MCF 10A (cell line): ENCODE measurements at regions of chr1 and their contacts with region 1.

Region 1: GRCh38 chr1:75991497-75992114 is 59.4 kb upstream of the ASB17 start:
- DNase-seq: peak; percentile 92
- H3K4me3 Mint-ChIP-seq: no peak overlapping the region
- H3K27ac Mint-ChIP-seq: no peak overlapping the region
- H3K4me1 Mint-ChIP-seq: no peaks in the 10 kb centered on the region
- H3K27me3 Mint-ChIP-seq: no peaks in the 10 kb centered on the region
- CTCF ChIP-seq: peak; percentile 86

Region 2: GRCh38 chr1:75841421-75841820 is 150.2 kb before region 1 on chr1:
- CTCF ChIA-PET with region 1: interaction called, 4 read pairs
- POLR2A ChIA-PET with region 1: no interaction called
- intact Hi-C with region 1: loop called (anchors 5 kb)
- DNase-seq: no peak
- H3K4me3 Mint-ChIP-seq: no peak overlapping the region
- H3K27ac Mint-ChIP-seq: no peak overlapping the region
- H3K4me1 Mint-ChIP-seq: no peaks in the 10 kb centered on the region
- H3K27me3 Mint-ChIP-seq: no peaks in the 10 kb centered on the region
- CTCF ChIP-seq: no peak

Region 3: GRCh38 chr1:75908717-75909152 is 82.9 kb before region 1 on chr1:
- CTCF ChIA-PET with region 1: interaction called, 7 read pairs
- POLR2A ChIA-PET with region 1: no interaction called
- intact Hi-C with region 1: loop called (anchors 1 kb)
- DNase-seq: peak; percentile 72
- H3K4me3 Mint-ChIP-seq: no peak overlapping the region
- H3K27ac Mint-ChIP-seq: no peak overlapping the region
- H3K4me1 Mint-ChIP-seq: no peaks in the 10 kb centered on the region
- H3K27me3 Mint-ChIP-seq: peaks cover 33% of the 10 kb centered on the region
- CTCF ChIP-seq: peak; percentile 63

Region 4: GRCh38 chr1:75980972-75981897 is 10.4 kb before region 1 on chr1:
- CTCF ChIA-PET with region 1: interaction called, 18 read pairs
- POLR2A ChIA-PET with region 1: interaction called, 3 read pairs
- intact Hi-C with region 1: no loop called
- DNase-seq: no peak
- H3K4me3 Mint-ChIP-seq: no peak overlapping the region
- H3K27ac Mint-ChIP-seq: no peak overlapping the region
- H3K4me1 Mint-ChIP-seq: peaks cover 6% of the 10 kb centered on the region
- H3K27me3 Mint-ChIP-seq: no peaks in the 10 kb centered on the region
- CTCF ChIP-seq: no peak

Region 5: DNA sequence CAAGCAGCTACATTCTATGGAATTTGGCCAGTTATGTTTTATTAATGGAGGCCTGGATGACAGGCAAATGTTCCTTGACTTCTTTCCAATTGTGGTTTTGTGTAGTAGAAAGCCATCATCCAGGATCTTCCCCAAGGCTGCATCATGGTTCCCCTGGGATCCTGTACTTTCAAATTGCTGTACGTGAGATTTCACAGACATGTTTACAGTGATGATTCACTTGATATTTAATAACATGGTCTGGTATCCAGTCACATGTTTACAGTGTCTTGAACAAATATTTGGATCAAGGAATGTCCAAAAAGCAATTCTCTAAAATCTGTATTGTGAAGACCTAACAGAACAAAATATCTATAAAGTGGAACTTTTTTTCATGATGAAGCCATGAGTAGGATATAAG is 14.6 kb after region 1 on chr1:
- CTCF ChIA-PET with region 1: interaction called, 29 read pairs
- POLR2A ChIA-PET with region 1: no interaction called
- intact Hi-C with region 1: no loop called
- DNase-seq: peak; percentile 69
- H3K4me3 Mint-ChIP-seq: no peak overlapping the region
- H3K27ac Mint-ChIP-seq: no peak overlapping the region
- H3K4me1 Mint-ChIP-seq: no peaks in the 10 kb centered on the region
- H3K27me3 Mint-ChIP-seq: no peaks in the 10 kb centered on the region
- CTCF ChIP-seq: no peak

Region 6: GRCh38 chr1:77126307-77126706 is 1134.7 kb after region 1 on chr1:
- CTCF ChIA-PET with region 1: interaction called, 3 read pairs
- POLR2A ChIA-PET with region 1: no interaction called
- intact Hi-C with region 1: loop called (anchors 5 kb)
- DNase-seq: peak; percentile 68
- H3K4me3 Mint-ChIP-seq: no peak overlapping the region
- H3K27ac Mint-ChIP-seq: no peak overlapping the region
- H3K4me1 Mint-ChIP-seq: peaks cover 10% of the 10 kb centered on the region
- H3K27me3 Mint-ChIP-seq: no peaks in the 10 kb centered on the region
- CTCF ChIP-seq: peak; percentile 79

Region 7: DNA sequence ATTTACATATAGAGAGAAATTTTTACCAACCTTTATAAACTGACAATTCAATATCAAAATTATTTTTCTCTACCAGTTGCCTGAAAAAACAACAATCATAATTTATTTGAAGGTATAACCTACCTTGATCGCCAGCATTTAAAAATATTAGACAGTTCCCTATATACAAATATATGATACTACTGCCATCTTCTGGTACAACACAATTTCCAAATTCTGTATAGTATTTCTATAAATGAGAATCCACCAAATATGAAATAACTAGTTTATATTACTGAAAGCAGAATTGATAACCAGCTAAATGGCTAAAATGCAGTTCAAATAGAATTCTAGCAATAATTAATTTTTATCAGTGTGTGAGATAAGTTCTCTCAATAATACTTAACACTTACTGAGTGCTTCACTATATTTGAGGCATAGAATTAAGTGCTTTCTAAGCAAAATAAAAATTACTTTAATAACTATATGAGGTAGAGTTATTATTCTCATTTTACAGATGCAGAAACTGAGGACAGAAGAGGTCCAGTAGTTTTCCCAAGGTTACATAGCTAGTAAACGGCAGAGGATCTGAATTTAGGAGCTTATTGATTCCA is 1152.0 kb after region 1 on chr1:
- CTCF ChIA-PET with region 1: interaction called, 7 read pairs
- POLR2A ChIA-PET with region 1: no interaction called
- intact Hi-C with region 1: loop called (anchors 5 kb)
- DNase-seq: peak; percentile 8
- H3K4me3 Mint-ChIP-seq: no peak overlapping the region
- H3K27ac Mint-ChIP-seq: no peak overlapping the region
- H3K4me1 Mint-ChIP-seq: no peaks in the 10 kb centered on the region
- H3K27me3 Mint-ChIP-seq: no peaks in the 10 kb centered on the region
- CTCF ChIP-seq: peak; percentile 36